Heart right ventricle (tissue), 16 donors: ENCODE measurements at regions of chr1 and their contacts with region 1.

Region 1: GRCh38 chr1:57061369-57061768 is 95.6 kb upstream of the C8B start:
- DNase-seq: peak in 1 of 2 donors; percentile 19
- ATAC-seq: peak in 6 of 8 donors; percentile 57 to 81 (median 66)
- H3K4me3 ChIP-seq: no peak overlapping the region
- H3K27ac ChIP-seq: no peak overlapping the region
- H3K4me1 ChIP-seq: peaks cover 0 to 14% (median 0%) of the 10 kb centered on the region in 9 donors
- H3K27me3 ChIP-seq: no peaks in the 10 kb centered on the region
- CTCF ChIP-seq: peak in 2 of 9 donors; percentile 31 to 32

Region 2: DNA sequence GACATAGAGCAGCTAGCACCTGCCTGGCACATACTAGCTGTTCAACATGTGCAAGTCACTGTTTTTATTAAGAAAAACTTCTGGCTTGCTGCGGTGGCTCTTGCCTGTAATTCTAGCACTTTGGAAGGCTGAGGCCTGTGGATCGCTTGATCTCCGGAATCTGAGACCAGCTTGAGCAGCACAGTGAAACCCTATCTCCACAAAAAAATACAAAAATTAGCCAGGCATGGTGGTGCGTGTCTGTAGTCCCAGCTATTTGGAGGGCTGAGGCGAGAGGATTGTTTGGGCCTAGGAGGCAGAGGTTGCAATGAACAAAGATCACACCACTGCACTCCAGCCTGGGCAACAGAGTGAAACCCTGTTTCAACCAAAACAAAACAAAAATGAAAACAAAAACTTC is 67.9 kb before region 1 on chr1:
- intact Hi-C with region 1: loop called in 1 of 10 experiments (anchors 2 kb)
- DNase-seq: no peak
- ATAC-seq: no peak
- H3K4me3 ChIP-seq: no peak overlapping the region
- H3K27ac ChIP-seq: no peak overlapping the region
- H3K4me1 ChIP-seq: peaks cover 0 to 5% (median 0%) of the 10 kb centered on the region in 9 donors
- H3K27me3 ChIP-seq: no peaks in the 10 kb centered on the region
- CTCF ChIP-seq: no peak

Region 3: GRCh38 chr1:57112148-57112547 is 50.8 kb after region 1 on chr1:
- intact Hi-C with region 1: loop called in 1 of 10 experiments (anchors 10 kb)
- DNase-seq: no peak
- ATAC-seq: no peak
- H3K4me3 ChIP-seq: no peak overlapping the region
- H3K27ac ChIP-seq: no peak overlapping the region
- H3K4me1 ChIP-seq: peaks cover 0 to 43% (median 10%) of the 10 kb centered on the region in 9 donors
- H3K27me3 ChIP-seq: no peaks in the 10 kb centered on the region
- CTCF ChIP-seq: no peak

Region 4: GRCh38 chr1:57157818-57158603 is 96.6 kb after region 1 on chr1:
- intact Hi-C with region 1: no loop called
- DNase-seq: no peak
- ATAC-seq: no peak
- H3K4me3 ChIP-seq: no peak overlapping the region
- H3K27ac ChIP-seq: no peak overlapping the region
- H3K4me1 ChIP-seq: peaks cover 0 to 7% (median 0%) of the 10 kb centered on the region in 9 donors
- H3K27me3 ChIP-seq: no peaks in the 10 kb centered on the region
- CTCF ChIP-seq: no peak